ENCODE measurements at regions of chr17 and their contacts with region 1.

Region 1: GRCh38 chr17:77429919-77430752 is 289.4 kb downstream of the SEC14L1 start:
- DNase-seq: peak; percentile 98
- H3K4me3 ChIP-seq: no peak overlapping the region
- H3K27ac ChIP-seq: peak overlapping the region; percentile 96 to 99 (median 98)
- H3K4me1 ChIP-seq: peaks cover 89 to 100% (median 100%) of the 10 kb centered on the region in 4 donors
- H3K27me3 ChIP-seq: no peaks in the 10 kb centered on the region
- CTCF ChIP-seq: peak; percentile 84 to 94 (median 93)
- EP300 ChIP-seq: peak; percentile 67
- POLR2A ChIP-seq: no peak

Region 2: DNA sequence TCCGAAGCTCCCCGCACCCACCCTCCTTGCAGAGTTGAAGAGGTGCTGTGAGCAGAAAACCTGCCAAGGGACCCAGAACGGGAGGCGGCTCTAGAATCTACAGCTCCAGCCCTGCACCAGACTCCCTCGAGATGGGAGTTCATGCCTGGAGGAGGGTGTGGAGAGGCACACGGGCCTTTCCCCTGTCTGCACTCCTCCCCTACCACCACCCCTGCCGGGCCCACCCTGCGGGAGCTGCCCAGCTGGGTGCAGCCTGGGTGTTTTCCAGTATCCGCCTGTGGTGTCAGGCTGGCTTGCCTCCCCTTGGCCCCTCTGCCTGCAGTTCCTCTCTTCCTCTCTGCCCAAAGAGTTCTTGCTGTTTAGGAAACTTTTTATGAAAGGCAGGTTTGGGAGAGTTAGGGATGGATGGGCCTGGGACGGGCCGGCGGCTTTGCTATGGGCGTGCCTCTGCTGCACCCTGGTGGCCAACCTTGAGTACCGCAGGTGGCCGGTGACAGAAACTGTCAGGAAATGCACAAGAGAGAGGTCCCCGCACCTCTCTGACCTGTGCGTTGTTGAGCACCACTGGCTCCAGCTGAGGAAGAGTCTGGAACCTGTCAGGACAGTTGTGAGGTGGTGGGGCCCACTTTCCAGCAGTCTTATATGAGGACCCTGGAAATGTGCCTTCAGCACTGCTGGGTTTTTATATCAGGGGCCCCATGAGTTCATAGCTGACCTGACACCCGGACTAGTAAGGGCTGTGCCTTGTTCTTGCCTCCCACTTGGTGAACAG is 64.7 kb after region 1 on chr17:
- intact Hi-C with region 1: loop called (anchors 2 kb)
- DNase-seq: no peak
- H3K4me3 ChIP-seq: no peak overlapping the region
- H3K27ac ChIP-seq: peak overlapping the region; percentile 67 to 81 (median 72)
- H3K4me1 ChIP-seq: peaks cover 18 to 33% (median 29%) of the 10 kb centered on the region in 4 donors
- H3K27me3 ChIP-seq: no peaks in the 10 kb centered on the region
- CTCF ChIP-seq: peak; percentile 98 to 100 (median 99)
- EP300 ChIP-seq: no peak
- POLR2A ChIP-seq: no peak

Region 3: DNA sequence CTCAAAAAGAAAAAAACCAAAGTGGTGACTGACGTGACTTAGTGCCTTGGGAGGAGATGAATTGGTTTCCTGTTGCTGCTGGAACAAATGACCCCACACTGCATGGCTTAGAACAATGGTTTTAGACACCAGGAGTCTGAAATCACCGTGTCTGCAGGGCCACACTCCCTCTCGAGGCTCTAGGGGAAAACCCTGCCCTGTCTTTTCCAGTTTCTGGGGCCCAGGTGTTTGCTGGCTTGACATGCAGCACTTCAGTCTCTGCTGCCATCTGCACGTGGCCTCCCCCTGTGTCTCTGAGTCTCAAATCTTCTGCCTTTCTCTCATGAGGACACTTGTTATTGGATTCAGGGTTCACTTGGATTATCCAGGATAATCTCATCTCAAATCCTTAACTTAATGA is 204.6 kb after region 1 on chr17:
- intact Hi-C with region 1: no loop called
- DNase-seq: no peak
- H3K4me3 ChIP-seq: no peak overlapping the region
- H3K27ac ChIP-seq: no peak overlapping the region
- H3K4me1 ChIP-seq: no peaks in the 10 kb centered on the region
- H3K27me3 ChIP-seq: no peaks in the 10 kb centered on the region
- CTCF ChIP-seq: no peak
- EP300 ChIP-seq: no peak
- POLR2A ChIP-seq: no peak

Measured in esophagus muscularis mucosa (tissue), 4 donors.